ENCODE measurements at regions of chr14 and their contacts with region 1.

Region 1: DNA sequence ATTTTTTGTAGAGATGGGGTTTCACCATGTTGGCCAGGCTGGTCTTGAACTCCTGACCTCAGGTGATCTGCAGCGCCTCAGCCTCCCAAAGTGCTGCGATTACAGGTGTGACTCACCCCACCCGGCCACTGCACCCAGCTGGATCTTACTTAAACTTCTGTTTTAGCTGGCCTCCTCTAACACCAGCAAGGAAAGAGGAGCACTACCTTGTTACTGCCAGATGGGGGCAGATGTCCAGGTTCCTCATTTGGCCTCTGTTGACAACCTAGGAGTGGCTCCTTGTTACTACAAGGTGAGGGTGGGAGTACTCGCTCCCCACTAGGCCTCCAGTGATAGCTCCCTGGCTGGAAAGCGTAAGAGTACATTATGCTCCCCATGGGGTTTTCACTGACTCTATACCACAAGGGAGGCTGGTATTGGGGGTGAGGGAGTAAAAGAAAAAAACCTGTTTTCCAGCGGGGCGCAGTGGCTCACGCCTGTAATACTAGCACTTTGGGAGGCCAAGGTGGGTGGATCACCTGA is 13.1 kb upstream of the ARF6 start:
- DNase-seq: peak; percentile 63 to 72 (median 65)
- H3K4me3 ChIP-seq: no peak overlapping the region
- H3K4me3 Mint-ChIP-seq: no peak overlapping the region
- H3K27ac ChIP-seq: no peak overlapping the region
- H3K27ac Mint-ChIP-seq: peak overlapping the region; percentile 67 to 89 (median 82)
- H3K4me1 ChIP-seq: peaks cover 15% of the 10 kb centered on the region
- H3K4me1 Mint-ChIP-seq: peaks cover 6 to 12% (median 8%) of the 10 kb centered on the region in 4 donors
- H3K27me3 ChIP-seq: no peaks in the 10 kb centered on the region
- H3K27me3 Mint-ChIP-seq: no peaks in the 10 kb centered on the region

Region 2: GRCh38 chr14:49761839-49762551 is 117.7 kb before region 1 on chr14:
- CTCF ChIA-PET with region 1: no interaction called
- POLR2A ChIA-PET with region 1: no interaction called
- intact Hi-C with region 1: no loop called
- DNase-seq: no peak
- H3K4me3 ChIP-seq: no peak overlapping the region
- H3K4me3 Mint-ChIP-seq: no peak overlapping the region
- H3K27ac ChIP-seq: no peak overlapping the region
- H3K27ac Mint-ChIP-seq: peak overlapping the region in 1 of 7 donors; percentile 33
- H3K4me1 ChIP-seq: peaks cover 5% of the 10 kb centered on the region
- H3K4me1 Mint-ChIP-seq: peaks cover 2 to 5% (median 4%) of the 10 kb centered on the region in 4 donors
- H3K27me3 ChIP-seq: no peaks in the 10 kb centered on the region
- H3K27me3 Mint-ChIP-seq: no peaks in the 10 kb centered on the region

Region 3: DNA sequence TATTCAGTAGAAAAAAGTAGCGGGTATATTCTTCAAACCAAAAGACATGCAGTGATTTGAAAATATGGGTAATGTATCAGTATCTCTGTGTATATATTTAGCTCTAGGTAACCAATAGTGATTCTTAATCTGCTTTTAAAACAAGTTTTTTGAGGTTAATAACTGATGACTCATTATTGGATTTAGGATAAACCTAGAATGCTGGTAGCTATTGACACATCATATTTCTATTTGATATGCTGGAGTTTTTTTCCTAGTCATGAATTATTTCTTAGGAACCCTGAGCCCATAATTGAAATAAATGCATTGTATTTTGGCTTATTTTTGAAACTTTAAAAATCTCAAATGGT is 28.7 kb after region 1 on chr14:
- CTCF ChIA-PET with region 1: interaction called, 13 read pairs
- POLR2A ChIA-PET with region 1: interaction called, 4 read pairs
- intact Hi-C with region 1: no loop called
- DNase-seq: no peak
- H3K4me3 ChIP-seq: no peak overlapping the region
- H3K4me3 Mint-ChIP-seq: peak overlapping the region in 1 of 8 donors; percentile 39
- H3K27ac ChIP-seq: no peak overlapping the region
- H3K27ac Mint-ChIP-seq: peak overlapping the region in 2 of 7 donors; percentile 8 to 70
- H3K4me1 ChIP-seq: peaks cover 38% of the 10 kb centered on the region
- H3K4me1 Mint-ChIP-seq: peaks cover 18 to 42% (median 32%) of the 10 kb centered on the region in 4 donors
- H3K27me3 ChIP-seq: no peaks in the 10 kb centered on the region
- H3K27me3 Mint-ChIP-seq: no peaks in the 10 kb centered on the region

Region 4: GRCh38 chr14:49977126-49977841 is 97.5 kb after region 1 on chr14:
- CTCF ChIA-PET with region 1: interaction called, 13 read pairs
- POLR2A ChIA-PET with region 1: interaction called, 16 read pairs
- intact Hi-C with region 1: no loop called
- DNase-seq: peak; percentile 48 to 66 (median 61)
- H3K4me3 ChIP-seq: peak overlapping the region; percentile 50 to 53
- H3K4me3 Mint-ChIP-seq: peak overlapping the region; percentile 75 to 89 (median 84)
- H3K27ac ChIP-seq: peak overlapping the region; percentile 48
- H3K27ac Mint-ChIP-seq: peak overlapping the region; percentile 91 to 95 (median 93)
- H3K4me1 ChIP-seq: peaks cover 100% of the 10 kb centered on the region
- H3K4me1 Mint-ChIP-seq: peaks cover 60 to 96% (median 87%) of the 10 kb centered on the region in 4 donors
- H3K27me3 ChIP-seq: no peaks in the 10 kb centered on the region
- H3K27me3 Mint-ChIP-seq: no peaks in the 10 kb centered on the region

Region 5: GRCh38 chr14:50038398-50039119 is 158.8 kb after region 1 on chr14:
- CTCF ChIA-PET with region 1: interaction called, 10 read pairs
- POLR2A ChIA-PET with region 1: interaction called, 7 read pairs
- intact Hi-C with region 1: no loop called
- DNase-seq: peak in 2 of 5 donors; percentile 10 to 63
- H3K4me3 ChIP-seq: no peak overlapping the region
- H3K4me3 Mint-ChIP-seq: peak overlapping the region in 7 of 8 donors; percentile 37 to 92 (median 73)
- H3K27ac ChIP-seq: peak overlapping the region; percentile 28
- H3K27ac Mint-ChIP-seq: peak overlapping the region; percentile 81 to 96 (median 93)
- H3K4me1 ChIP-seq: peaks cover 59% of the 10 kb centered on the region
- H3K4me1 Mint-ChIP-seq: peaks cover 38 to 71% (median 57%) of the 10 kb centered on the region in 4 donors
- H3K27me3 ChIP-seq: no peaks in the 10 kb centered on the region
- H3K27me3 Mint-ChIP-seq: no peaks in the 10 kb centered on the region

Region 6: GRCh38 chr14:50099335-50099734 is 219.6 kb after region 1 on chr14:
- CTCF ChIA-PET with region 1: interaction called, 19 read pairs
- POLR2A ChIA-PET with region 1: interaction called, 9 read pairs
- intact Hi-C with region 1: no loop called
- DNase-seq: peak in 1 of 5 donors; percentile 25
- H3K4me3 ChIP-seq: no peak overlapping the region
- H3K4me3 Mint-ChIP-seq: peak overlapping the region in 5 of 8 donors; percentile 7 to 38 (median 28)
- H3K27ac ChIP-seq: no peak overlapping the region
- H3K27ac Mint-ChIP-seq: peak overlapping the region; percentile 10 to 92 (median 80)
- H3K4me1 ChIP-seq: peaks cover 69% of the 10 kb centered on the region
- H3K4me1 Mint-ChIP-seq: peaks cover 41 to 68% (median 54%) of the 10 kb centered on the region in 4 donors
- H3K27me3 ChIP-seq: no peaks in the 10 kb centered on the region
- H3K27me3 Mint-ChIP-seq: no peaks in the 10 kb centered on the region

Region 7: DNA sequence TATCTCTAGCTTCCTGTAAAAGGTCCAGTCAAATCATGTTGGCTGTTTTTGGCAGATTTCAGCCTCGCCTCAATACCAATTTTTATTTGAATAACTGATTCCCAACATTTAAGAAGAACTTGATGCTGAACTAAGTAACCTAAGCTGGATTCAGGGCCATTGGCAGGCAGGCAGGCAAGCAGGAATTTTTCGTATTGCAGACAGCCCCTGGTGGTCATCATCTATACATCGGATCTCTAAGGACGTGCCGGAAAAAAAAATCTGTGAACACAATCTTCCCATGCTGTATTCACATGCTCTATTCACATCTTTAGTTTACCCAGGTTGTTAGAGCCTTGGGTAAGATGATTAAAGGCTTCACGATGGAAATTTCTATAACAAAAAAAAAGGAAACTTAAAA is 229.6 kb after region 1 on chr14:
- CTCF ChIA-PET with region 1: interaction called, 19 read pairs
- POLR2A ChIA-PET with region 1: interaction called, 9 read pairs
- intact Hi-C with region 1: loop called (anchors 1 kb)
- DNase-seq: no peak
- H3K4me3 ChIP-seq: no peak overlapping the region
- H3K4me3 Mint-ChIP-seq: no peak overlapping the region
- H3K27ac ChIP-seq: no peak overlapping the region
- H3K27ac Mint-ChIP-seq: peak overlapping the region in 5 of 7 donors; percentile 19 to 56 (median 37)
- H3K4me1 ChIP-seq: peaks cover 15% of the 10 kb centered on the region
- H3K4me1 Mint-ChIP-seq: peaks cover 6 to 25% (median 14%) of the 10 kb centered on the region in 4 donors
- H3K27me3 ChIP-seq: no peaks in the 10 kb centered on the region
- H3K27me3 Mint-ChIP-seq: no peaks in the 10 kb centered on the region

Region 8: DNA sequence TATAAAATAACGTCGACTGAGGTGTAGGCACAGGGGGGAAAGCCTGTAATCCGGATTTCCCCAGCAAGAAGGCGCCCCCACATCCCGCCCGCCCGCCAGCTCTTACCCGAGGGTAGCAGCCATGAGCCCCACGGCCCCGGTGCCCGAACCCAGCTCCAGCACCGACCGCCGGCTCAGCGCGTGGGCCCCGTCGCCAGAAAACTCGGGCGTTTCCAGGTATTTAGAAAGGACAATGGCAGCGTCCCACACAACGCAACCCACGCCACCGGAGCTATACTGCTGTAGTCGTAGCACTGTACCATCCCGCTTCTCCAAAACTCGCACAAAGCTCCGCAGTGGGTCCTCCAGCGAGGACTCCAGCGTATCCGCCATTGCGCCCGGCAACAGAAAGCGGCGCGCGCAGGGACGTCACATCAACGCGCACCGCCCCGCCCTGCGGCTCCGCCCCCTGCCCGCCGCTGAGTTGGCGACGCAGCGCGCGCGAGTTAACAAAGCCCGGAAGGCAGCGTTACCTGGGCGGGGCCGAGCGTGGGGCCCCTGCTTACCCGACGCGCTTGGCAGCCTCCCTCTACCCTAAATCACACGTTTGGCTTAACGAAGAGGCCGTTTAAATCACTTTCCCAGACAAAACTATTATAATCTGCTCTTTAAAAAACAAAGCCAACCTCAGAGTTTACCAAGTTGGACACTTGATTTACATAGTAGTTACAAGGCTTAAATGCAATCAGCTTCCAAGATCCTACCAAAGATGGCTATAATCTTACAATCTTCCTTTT is 236.6 kb after region 1 on chr14 and contains the start of gene VCPKMT:
- CTCF ChIA-PET with region 1: interaction called, 10 read pairs
- POLR2A ChIA-PET with region 1: interaction called, 6 read pairs
- intact Hi-C with region 1: no loop called
- DNase-seq: peak; percentile 93 to 96 (median 95)
- H3K4me3 ChIP-seq: peak within 1 kb of the TSS; percentile 65 to 69
- H3K4me3 Mint-ChIP-seq: peak within 1 kb of the TSS; percentile 97 to 98 (median 98)
- H3K27ac ChIP-seq: peak within 1 kb of the TSS; percentile 93
- H3K27ac Mint-ChIP-seq: peak within 1 kb of the TSS; percentile 96 to 100 (median 99)
- H3K4me1 ChIP-seq: peaks cover 34% of the 10 kb centered on the region
- H3K4me1 Mint-ChIP-seq: peaks cover 10 to 32% (median 23%) of the 10 kb centered on the region in 4 donors
- H3K27me3 ChIP-seq: no peaks in the 10 kb centered on the region
- H3K27me3 Mint-ChIP-seq: no peaks in the 10 kb centered on the region
- total RNA-seq, gene VCPKMT: 17.3 to 20.1 TPM